Activated naive CD4-positive, alpha-beta T cell treated with anti-CD3 and anti-CD28 coated beads for 36 hours (primary cell): ENCODE measurements at regions of chr4 and their contacts with region 1.

Region 1: GRCh38 chr4:183398227-183399125 is 46.0 kb upstream of the CDKN2AIP start:
- DNase-seq: peak; percentile 75
- H3K4me3 Mint-ChIP-seq: peak overlapping the region; percentile 85
- H3K27ac Mint-ChIP-seq: no peak overlapping the region
- H3K4me1 Mint-ChIP-seq: peaks cover 19% of the 10 kb centered on the region
- H3K27me3 Mint-ChIP-seq: no peaks in the 10 kb centered on the region

Region 2: DNA sequence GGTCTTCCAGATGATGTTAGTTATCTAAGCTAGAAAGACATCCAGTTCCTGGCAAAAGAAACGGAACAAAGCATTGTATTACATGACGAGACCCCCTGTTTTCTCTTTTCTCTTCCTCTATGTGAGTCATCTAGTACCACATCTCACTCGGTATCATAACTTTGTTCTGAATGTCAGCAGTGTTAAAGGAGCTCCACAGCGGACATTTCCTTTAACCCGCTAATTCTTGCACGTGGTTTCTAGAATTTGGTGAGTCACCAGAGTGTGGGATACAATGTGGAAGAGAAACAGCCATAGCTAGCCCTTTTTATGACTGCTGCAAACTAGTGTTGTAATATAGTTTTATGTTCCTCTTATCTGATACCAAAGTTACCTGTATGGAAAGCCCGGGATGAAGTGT is 911.6 kb before region 1 on chr4:
- CTCF ChIA-PET with region 1: interaction called, 3 read pairs
- intact Hi-C with region 1: loop called (anchors 10 kb)
- DNase-seq: no peak
- H3K4me3 Mint-ChIP-seq: no peak overlapping the region
- H3K27ac Mint-ChIP-seq: no peak overlapping the region
- H3K4me1 Mint-ChIP-seq: peaks cover under 1% of the 10 kb centered on the region
- H3K27me3 Mint-ChIP-seq: peaks cover 12% of the 10 kb centered on the region

Region 3: DNA sequence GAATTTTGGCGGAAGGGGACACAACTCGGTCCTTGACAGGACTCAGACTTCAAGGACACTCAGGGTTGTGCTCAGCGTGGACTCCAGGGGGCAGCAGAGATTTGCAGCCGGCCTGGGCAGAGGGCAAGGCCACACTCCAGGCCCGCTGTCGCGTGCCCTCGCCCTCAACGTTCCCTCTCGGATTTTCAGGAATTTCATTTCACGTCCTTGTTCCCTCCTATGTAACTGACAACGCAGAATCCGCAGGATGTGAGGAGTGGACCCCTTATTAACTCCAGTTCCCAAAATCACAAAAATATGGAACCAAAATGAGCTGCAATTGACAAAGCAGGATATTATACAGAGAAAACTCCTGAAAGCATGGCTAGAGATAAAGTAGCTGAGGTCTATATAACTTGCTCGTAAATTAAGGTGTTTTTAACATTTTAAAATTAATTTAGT is 460.3 kb before region 1 on chr4:
- CTCF ChIA-PET with region 1: interaction called, 4 read pairs
- intact Hi-C with region 1: loop called (anchors 5 kb)
- DNase-seq: peak; percentile 81
- H3K4me3 Mint-ChIP-seq: no peak overlapping the region
- H3K27ac Mint-ChIP-seq: no peak overlapping the region
- H3K4me1 Mint-ChIP-seq: peaks cover 6% of the 10 kb centered on the region
- H3K27me3 Mint-ChIP-seq: peaks cover 7% of the 10 kb centered on the region

Region 4: DNA sequence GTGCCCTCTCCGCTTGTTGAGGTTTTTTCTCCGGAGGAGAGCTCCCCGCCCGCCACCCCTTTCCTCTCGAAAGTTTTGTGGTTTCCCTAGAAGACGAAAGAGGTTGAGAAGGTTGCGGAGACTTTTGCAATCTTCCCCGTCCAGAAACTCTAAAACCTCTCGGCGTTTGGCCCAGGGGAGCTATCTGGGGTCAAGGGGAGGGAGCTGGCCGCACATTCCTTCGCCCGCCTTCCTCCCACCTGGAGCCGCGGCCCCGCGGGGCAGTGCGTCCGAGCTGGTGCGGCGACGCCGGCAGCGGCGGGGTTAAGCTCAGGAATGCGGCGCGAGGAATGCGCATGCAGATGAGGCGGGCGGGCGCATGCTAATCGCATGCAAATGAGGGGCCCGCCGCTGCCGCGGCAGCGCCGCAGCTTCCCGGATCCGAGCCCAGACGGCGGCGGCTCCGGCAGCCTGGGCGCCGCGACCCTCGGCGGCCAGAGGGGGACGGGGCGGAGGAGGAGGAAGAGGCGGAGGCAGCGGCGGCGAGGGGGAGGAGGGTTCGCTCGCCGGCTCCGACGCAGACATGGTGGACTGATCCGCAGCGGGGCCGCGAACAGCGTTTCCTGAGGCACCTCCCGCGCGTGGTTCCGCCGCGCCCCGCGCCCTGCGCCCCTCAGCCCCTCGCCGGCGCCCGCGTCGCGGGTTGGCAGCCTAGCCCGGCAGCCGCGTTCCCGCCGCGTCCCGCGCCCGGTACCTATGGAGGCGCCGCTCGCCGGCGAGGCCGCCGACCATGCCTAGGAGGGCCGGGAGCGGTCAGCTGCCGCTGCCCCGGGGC is 299.5 kb before region 1 on chr4 and contains the start of gene WWC2:
- CTCF ChIA-PET with region 1: no interaction called
- intact Hi-C with region 1: loop called (anchors 2 kb)
- DNase-seq: peak; percentile 64
- H3K4me3 Mint-ChIP-seq: peak within 1 kb of the TSS; percentile 66
- H3K27ac Mint-ChIP-seq: no peak within 1 kb of the TSS
- H3K4me1 Mint-ChIP-seq: peaks cover 13% of the 10 kb centered on the region
- H3K27me3 Mint-ChIP-seq: peaks cover 23% of the 10 kb centered on the region
- total RNA-seq, gene WWC2: 6.7 to 10.0 TPM

Region 5: GRCh38 chr4:183348706-183349659 is 49.5 kb before region 1 on chr4:
- CTCF ChIA-PET with region 1: no interaction called
- intact Hi-C with region 1: loop called (anchors 2 kb)
- DNase-seq: peak; percentile 73
- H3K4me3 Mint-ChIP-seq: no peak overlapping the region
- H3K27ac Mint-ChIP-seq: no peak overlapping the region
- H3K4me1 Mint-ChIP-seq: peaks cover 17% of the 10 kb centered on the region
- H3K27me3 Mint-ChIP-seq: peaks cover 28% of the 10 kb centered on the region